Activated B cell treated with CpG ODN at 0.5 μM for 24 hours (primary cell): ENCODE measurements at regions of chr11 and their contacts with region 1.

Region 1: GRCh38 chr11:62705880-62706849 is 1.1 kb downstream of the BSCL2 start:
- DNase-seq: peak; percentile 90
- ATAC-seq: peak; percentile 73
- H3K4me3 Mint-ChIP-seq: peak overlapping the region; percentile 92
- H3K27ac Mint-ChIP-seq: peak overlapping the region; percentile 99
- H3K4me1 Mint-ChIP-seq: peaks cover 49% of the 10 kb centered on the region
- H3K27me3 Mint-ChIP-seq: no peaks in the 10 kb centered on the region
- CTCF ChIP-seq: no peak

Region 2: GRCh38 chr11:62601394-62602140 is 104.6 kb before region 1 on chr11 and contains the start of gene MTA2:
- CTCF ChIA-PET with region 1: no interaction called
- POLR2A ChIA-PET with region 1: interaction called, 11 read pairs
- intact Hi-C with region 1: no loop called
- DNase-seq: peak; percentile 100
- ATAC-seq: peak; percentile 81
- H3K4me3 Mint-ChIP-seq: peak within 1 kb of the TSS; percentile 92
- H3K27ac Mint-ChIP-seq: peak within 1 kb of the TSS; percentile 97
- H3K4me1 Mint-ChIP-seq: peaks cover 45% of the 10 kb centered on the region
- H3K27me3 Mint-ChIP-seq: no peaks in the 10 kb centered on the region
- CTCF ChIP-seq: no peak
- total RNA-seq, gene MTA2: 170 and 175 TPM in 2 replicates

Region 3: GRCh38 chr11:62621567-62622470 is 84.3 kb before region 1 on chr11 and contains the start of gene B3GAT3:
- CTCF ChIA-PET with region 1: no interaction called
- POLR2A ChIA-PET with region 1: interaction called, 13 read pairs
- intact Hi-C with region 1: no loop called
- DNase-seq: peak; percentile 93
- ATAC-seq: peak; percentile 92
- H3K4me3 Mint-ChIP-seq: peak within 1 kb of the TSS; percentile 90
- H3K27ac Mint-ChIP-seq: peak within 1 kb of the TSS; percentile 93
- H3K4me1 Mint-ChIP-seq: peaks cover 19% of the 10 kb centered on the region
- H3K27me3 Mint-ChIP-seq: no peaks in the 10 kb centered on the region
- CTCF ChIP-seq: no peak
- total RNA-seq, gene B3GAT3: 48.8 and 56.6 TPM in 2 replicates

Region 4: GRCh38 chr11:62652161-62653006 is 53.8 kb before region 1 on chr11:
- CTCF ChIA-PET with region 1: no interaction called
- POLR2A ChIA-PET with region 1: interaction called, 20 read pairs
- intact Hi-C with region 1: loop called (anchors 1 kb)
- DNase-seq: no peak
- ATAC-seq: no peak
- H3K4me3 Mint-ChIP-seq: peak overlapping the region; percentile 90
- H3K27ac Mint-ChIP-seq: peak overlapping the region; percentile 90
- H3K4me1 Mint-ChIP-seq: peaks cover 28% of the 10 kb centered on the region
- H3K27me3 Mint-ChIP-seq: no peaks in the 10 kb centered on the region
- CTCF ChIP-seq: no peak

Region 5: GRCh38 chr11:62678770-62679696 is 27.1 kb before region 1 on chr11 and contains the start of gene UBXN1:
- CTCF ChIA-PET with region 1: interaction called, 3 read pairs
- POLR2A ChIA-PET with region 1: interaction called, 44 read pairs
- intact Hi-C with region 1: loop called (anchors 2 kb)
- DNase-seq: peak; percentile 77
- ATAC-seq: peak; percentile 74
- H3K4me3 Mint-ChIP-seq: peak within 1 kb of the TSS; percentile 91
- H3K27ac Mint-ChIP-seq: peak within 1 kb of the TSS; percentile 96
- H3K4me1 Mint-ChIP-seq: peaks cover 41% of the 10 kb centered on the region
- H3K27me3 Mint-ChIP-seq: no peaks in the 10 kb centered on the region
- CTCF ChIP-seq: no peak
- total RNA-seq, gene UBXN1: 204 and 205 TPM in 2 replicates

Region 6: GRCh38 chr11:62787005-62787759 is 81.0 kb after region 1 on chr11 and contains the start of gene TMEM179B:
- CTCF ChIA-PET with region 1: no interaction called
- POLR2A ChIA-PET with region 1: interaction called, 26 read pairs
- intact Hi-C with region 1: loop called (anchors 1 kb)
- DNase-seq: peak; percentile 87
- ATAC-seq: peak; percentile 71
- H3K4me3 Mint-ChIP-seq: peak within 1 kb of the TSS; percentile 92
- H3K27ac Mint-ChIP-seq: peak within 1 kb of the TSS; percentile 89
- H3K4me1 Mint-ChIP-seq: peaks cover 42% of the 10 kb centered on the region
- H3K27me3 Mint-ChIP-seq: no peaks in the 10 kb centered on the region
- CTCF ChIP-seq: peak; percentile 66
- total RNA-seq, gene TMEM179B: 34.9 and 47.7 TPM in 2 replicates

Region 7: GRCh38 chr11:62855571-62856332 is 149.6 kb after region 1 on chr11:
- CTCF ChIA-PET with region 1: no interaction called
- POLR2A ChIA-PET with region 1: interaction called, 17 read pairs
- intact Hi-C with region 1: loop called (anchors 1 kb)
- DNase-seq: peak; percentile 99
- ATAC-seq: peak; percentile 89
- H3K4me3 Mint-ChIP-seq: peak overlapping the region; percentile 99
- H3K27ac Mint-ChIP-seq: peak overlapping the region; percentile 96
- H3K4me1 Mint-ChIP-seq: peaks cover 61% of the 10 kb centered on the region
- H3K27me3 Mint-ChIP-seq: no peaks in the 10 kb centered on the region
- CTCF ChIP-seq: no peak

Region 8: DNA sequence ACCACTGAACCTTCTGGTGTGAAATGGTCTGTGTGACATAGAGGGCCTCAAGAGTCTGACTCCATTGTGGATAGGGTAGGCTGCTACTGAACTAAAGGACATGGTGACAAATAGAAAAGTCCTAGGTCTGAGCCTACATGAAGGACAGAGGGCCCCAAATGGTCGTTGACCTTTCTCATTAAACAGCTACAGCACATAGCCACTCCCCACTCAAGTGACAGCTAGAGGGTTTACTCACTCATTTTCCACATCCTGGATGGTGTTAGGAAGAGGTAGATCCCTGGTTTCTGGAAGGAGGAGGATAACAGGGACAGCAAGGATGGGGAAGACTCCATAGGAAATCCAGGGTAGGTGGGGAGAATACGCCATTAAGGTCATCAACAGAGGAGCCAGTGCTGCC is 374.5 kb after region 1 on chr11:
- CTCF ChIA-PET with region 1: no interaction called
- POLR2A ChIA-PET with region 1: no interaction called
- intact Hi-C with region 1: no loop called
- DNase-seq: no peak
- ATAC-seq: no peak
- H3K4me3 Mint-ChIP-seq: no peak overlapping the region
- H3K27ac Mint-ChIP-seq: no peak overlapping the region
- H3K4me1 Mint-ChIP-seq: no peaks in the 10 kb centered on the region
- H3K27me3 Mint-ChIP-seq: peaks cover 38% of the 10 kb centered on the region
- CTCF ChIP-seq: no peak